ENCODE measurements at regions of chr5 and their contacts with region 1.

Region 1: DNA sequence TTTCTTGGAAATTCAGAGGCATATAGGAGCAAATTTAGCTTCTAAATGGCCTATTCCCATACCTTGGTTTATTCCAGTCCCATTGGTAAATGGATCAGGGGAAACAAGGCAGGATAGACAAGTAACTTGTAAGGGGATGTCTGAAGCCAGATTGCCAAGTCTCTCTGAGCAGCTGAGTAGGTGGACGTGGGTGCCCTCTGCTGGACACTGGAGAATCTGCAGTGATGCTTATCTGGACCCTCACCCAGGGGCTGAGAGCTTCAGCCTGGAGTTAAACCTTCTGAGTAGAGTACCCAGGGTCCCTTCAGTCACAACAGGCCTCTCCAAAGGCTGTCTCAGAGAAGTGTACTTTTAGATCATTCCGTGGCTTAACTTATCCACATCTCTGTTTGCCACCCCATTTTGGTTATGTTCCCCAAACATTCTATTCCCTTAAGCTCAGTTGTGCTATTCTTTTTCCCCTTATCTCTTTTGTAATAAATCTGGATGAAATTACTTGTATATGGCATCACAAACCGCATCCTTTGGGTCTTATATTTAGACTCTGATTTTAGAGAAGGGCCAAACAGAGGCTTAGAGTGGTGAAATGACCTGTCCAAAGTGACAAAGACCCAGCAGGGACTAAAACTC is 218.3 kb upstream of the GLRA1 start:
- DNase-seq: peak; percentile 75
- H3K4me3 Mint-ChIP-seq: no peak overlapping the region
- H3K27ac Mint-ChIP-seq: no peak overlapping the region
- H3K4me1 Mint-ChIP-seq: no peaks in the 10 kb centered on the region
- H3K27me3 Mint-ChIP-seq: peaks cover 26% of the 10 kb centered on the region
- CTCF ChIP-seq: peak; percentile 99

Region 2: GRCh38 chr5:151786468-151786867 is 356.5 kb before region 1 on chr5:
- CTCF ChIA-PET with region 1: interaction called, 11 read pairs
- POLR2A ChIA-PET with region 1: no interaction called
- intact Hi-C with region 1: no loop called
- DNase-seq: no peak
- H3K4me3 Mint-ChIP-seq: no peak overlapping the region
- H3K27ac Mint-ChIP-seq: no peak overlapping the region
- H3K4me1 Mint-ChIP-seq: peaks cover 26% of the 10 kb centered on the region
- H3K27me3 Mint-ChIP-seq: no peaks in the 10 kb centered on the region
- CTCF ChIP-seq: no peak

Region 3: GRCh38 chr5:151847871-151848270 is 295.1 kb before region 1 on chr5:
- CTCF ChIA-PET with region 1: interaction called, 10 read pairs
- POLR2A ChIA-PET with region 1: no interaction called
- intact Hi-C with region 1: no loop called
- DNase-seq: no peak
- H3K4me3 Mint-ChIP-seq: no peak overlapping the region
- H3K27ac Mint-ChIP-seq: no peak overlapping the region
- H3K4me1 Mint-ChIP-seq: no peaks in the 10 kb centered on the region
- H3K27me3 Mint-ChIP-seq: no peaks in the 10 kb centered on the region
- CTCF ChIP-seq: no peak

Region 4: DNA sequence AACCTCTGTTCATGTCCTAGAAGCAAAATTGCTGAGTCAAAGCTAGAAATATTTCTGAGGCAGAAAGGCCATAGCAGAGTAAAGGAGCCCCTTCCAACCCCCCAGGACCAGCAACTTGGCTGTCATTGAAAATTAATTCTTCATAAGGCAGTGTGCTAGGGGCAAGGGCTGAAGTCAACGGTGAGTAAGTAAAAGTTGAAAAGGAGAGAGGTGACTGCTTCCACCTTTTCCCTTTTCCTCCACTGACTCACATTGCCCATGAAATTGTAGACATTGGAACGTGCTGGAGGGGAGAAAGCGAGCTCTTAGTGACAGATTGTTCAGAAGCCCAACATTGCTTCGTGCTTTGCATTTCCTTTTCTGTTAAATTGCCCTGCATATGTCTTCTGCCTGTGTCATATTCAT is 237.4 kb before region 1 on chr5:
- CTCF ChIA-PET with region 1: interaction called, 11 read pairs
- POLR2A ChIA-PET with region 1: no interaction called
- intact Hi-C with region 1: no loop called
- DNase-seq: no peak
- H3K4me3 Mint-ChIP-seq: no peak overlapping the region
- H3K27ac Mint-ChIP-seq: no peak overlapping the region
- H3K4me1 Mint-ChIP-seq: no peaks in the 10 kb centered on the region
- H3K27me3 Mint-ChIP-seq: peaks cover 14% of the 10 kb centered on the region
- CTCF ChIP-seq: no peak

Region 5: GRCh38 chr5:152119073-152119470 is 23.9 kb before region 1 on chr5:
- CTCF ChIA-PET with region 1: interaction called, 40 read pairs
- POLR2A ChIA-PET with region 1: no interaction called
- intact Hi-C with region 1: no loop called
- DNase-seq: no peak
- H3K4me3 Mint-ChIP-seq: no peak overlapping the region
- H3K27ac Mint-ChIP-seq: no peak overlapping the region
- H3K4me1 Mint-ChIP-seq: no peaks in the 10 kb centered on the region
- H3K27me3 Mint-ChIP-seq: peaks cover 24% of the 10 kb centered on the region
- CTCF ChIP-seq: no peak

Region 6: GRCh38 chr5:152218694-152219093 is 75.7 kb after region 1 on chr5:
- CTCF ChIA-PET with region 1: interaction called, 12 read pairs
- POLR2A ChIA-PET with region 1: no interaction called
- intact Hi-C with region 1: no loop called
- DNase-seq: no peak
- H3K4me3 Mint-ChIP-seq: no peak overlapping the region
- H3K27ac Mint-ChIP-seq: no peak overlapping the region
- H3K4me1 Mint-ChIP-seq: no peaks in the 10 kb centered on the region
- H3K27me3 Mint-ChIP-seq: no peaks in the 10 kb centered on the region
- CTCF ChIP-seq: no peak

Region 7: DNA sequence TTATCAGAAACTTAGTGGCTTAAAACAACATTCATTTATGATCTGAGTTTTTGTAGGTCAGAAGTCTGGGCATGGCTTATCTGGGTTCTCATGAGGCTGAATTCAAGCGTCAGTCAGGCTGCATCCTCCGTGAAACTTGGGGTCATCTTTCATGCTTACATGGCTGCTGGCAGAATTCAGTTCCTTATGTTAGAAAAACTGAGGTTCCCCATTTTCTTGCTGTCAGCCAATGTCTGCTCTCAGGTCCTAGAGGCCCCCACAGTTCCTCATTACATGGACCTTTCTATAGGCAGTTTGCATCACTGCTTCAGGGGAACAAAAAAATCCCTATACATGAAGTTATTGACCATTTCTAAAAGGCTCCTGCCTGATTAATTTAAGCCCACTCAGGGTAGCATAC is 345.9 kb after region 1 on chr5:
- CTCF ChIA-PET with region 1: no interaction called
- POLR2A ChIA-PET with region 1: no interaction called
- intact Hi-C with region 1: no loop called
- DNase-seq: no peak
- H3K4me3 Mint-ChIP-seq: no peak overlapping the region
- H3K27ac Mint-ChIP-seq: no peak overlapping the region
- H3K4me1 Mint-ChIP-seq: no peaks in the 10 kb centered on the region
- H3K27me3 Mint-ChIP-seq: no peaks in the 10 kb centered on the region
- CTCF ChIP-seq: no peak